ENCODE measurements at regions of chr12 and their contacts with region 1.

Region 1: DNA sequence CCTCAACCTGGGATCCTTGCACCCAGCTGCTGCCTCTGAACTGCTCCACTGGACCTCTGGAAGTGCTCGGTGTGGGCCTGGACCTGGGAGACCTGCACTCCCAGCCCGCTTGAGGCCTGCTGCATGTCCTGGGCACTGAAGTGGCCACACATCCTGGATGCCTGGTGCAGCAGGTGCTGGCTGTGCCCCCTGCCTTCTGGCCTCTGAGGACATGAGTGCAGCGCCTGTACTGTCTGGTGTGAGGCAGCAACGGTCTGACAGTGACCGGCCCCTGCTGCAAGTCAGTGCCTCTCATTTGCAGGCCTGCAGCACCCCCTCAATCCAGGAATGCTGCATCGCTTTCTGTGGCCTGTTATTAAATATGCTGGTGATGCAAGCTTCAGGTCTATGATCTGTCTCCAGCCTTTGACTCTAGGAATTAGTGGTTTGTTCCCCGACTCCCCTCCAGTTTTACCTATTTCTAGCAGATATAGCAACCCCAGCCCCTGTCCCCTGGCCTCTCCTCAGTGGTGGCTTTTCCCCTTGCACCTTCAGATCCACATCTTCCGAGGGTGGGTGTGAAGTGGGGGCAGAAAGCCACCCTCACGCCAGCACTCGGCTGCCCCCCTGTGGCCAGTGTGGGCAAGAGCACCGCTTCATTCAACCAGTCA is 3.6 kb downstream of the SMIM41 start:
- DNase-seq: peak; percentile 90

Region 2: DNA sequence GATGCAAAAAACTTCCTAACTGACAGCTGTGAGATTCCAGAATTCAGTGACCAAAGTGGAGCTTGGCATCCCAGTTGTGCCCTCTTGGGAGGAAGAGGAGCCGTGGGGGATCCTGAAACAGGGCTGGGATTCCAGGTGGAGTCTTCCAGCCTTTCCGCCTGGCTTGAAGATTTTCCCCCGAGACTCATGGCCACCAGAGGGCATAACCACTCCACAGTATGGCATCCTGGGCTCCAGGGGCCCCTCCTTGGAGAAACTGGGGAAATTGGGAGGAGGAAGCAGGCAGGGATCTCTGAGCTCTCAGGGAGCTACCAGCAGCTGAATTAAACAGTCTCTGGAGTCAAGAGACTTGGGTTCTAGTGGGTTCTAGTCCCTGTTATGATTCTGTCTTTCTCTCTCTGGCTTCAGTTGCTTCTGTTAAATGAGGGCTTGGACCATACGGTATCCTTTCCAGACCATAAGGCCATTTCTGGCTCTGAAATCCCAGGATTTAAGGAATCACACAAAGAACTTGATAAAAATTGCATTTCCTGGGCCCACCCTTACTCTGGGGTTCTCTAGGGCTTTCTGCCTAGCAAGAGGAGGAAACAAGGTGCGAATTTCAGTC is 79.0 kb before region 1 on chr12:
- intact Hi-C with region 1: loop called in 1 of 2 experiments (anchors 5 kb)
- DNase-seq: no peak

Region 3: DNA sequence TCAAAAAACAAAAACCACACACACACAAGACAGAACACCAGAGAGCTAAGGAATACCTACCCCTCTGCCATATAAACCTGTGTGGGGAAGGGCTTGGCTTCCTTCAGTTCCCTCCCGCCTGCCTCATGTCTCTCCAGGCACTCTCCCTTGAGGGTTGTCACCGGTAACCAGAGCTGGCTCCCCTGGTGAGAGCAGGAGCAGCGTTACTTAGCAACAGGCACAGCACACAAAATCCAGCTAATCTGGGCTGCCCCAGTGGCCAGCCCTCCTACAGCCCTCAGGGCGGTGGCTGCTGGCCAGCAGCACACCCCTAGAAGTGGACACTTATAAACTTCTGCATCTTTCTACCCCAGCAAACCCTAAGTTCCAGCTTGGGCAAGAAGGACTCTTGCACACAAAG is 53.4 kb before region 1 on chr12:
- intact Hi-C with region 1: loop called (anchors 2 to 5 kb)
- DNase-seq: no peak

Region 4: GRCh38 chr12:52268212-52268611 is 185.1 kb after region 1 on chr12:
- intact Hi-C with region 1: no loop called
- DNase-seq: no peak

Region 5: GRCh38 chr12:52338241-52338960 is 255.3 kb after region 1 on chr12:
- intact Hi-C with region 1: no loop called
- DNase-seq: no peak

Region 6: GRCh38 chr12:53115112-53115890 is 1032.2 kb after region 1 on chr12:
- intact Hi-C with region 1: no loop called
- DNase-seq: no peak

Measured in posterior vena cava (tissue), 2 donors.